ENCODE measurements at regions of chr22 and their contacts with region 1.

Region 1: GRCh38 chr22:45240810-45241631 is at the start of gene KIAA0930:
- DNase-seq: peak; percentile 92
- H3K4me3 Mint-ChIP-seq: peak within 1 kb of the TSS; percentile 97
- H3K27ac Mint-ChIP-seq: peak within 1 kb of the TSS; percentile 91
- H3K4me1 Mint-ChIP-seq: peaks cover 10% of the 10 kb centered on the region
- H3K27me3 Mint-ChIP-seq: no peaks in the 10 kb centered on the region
- total RNA-seq, gene KIAA0930: 45.3 and 45.6 TPM in 2 replicates

Region 2: GRCh38 chr22:45309472-45310227 is 68.6 kb after region 1 on chr22 and contains the start of gene FAM118A:
- intact Hi-C with region 1: loop called (anchors 2 kb)
- DNase-seq: peak; percentile 100
- H3K4me3 Mint-ChIP-seq: peak within 1 kb of the TSS; percentile 93
- H3K27ac Mint-ChIP-seq: peak within 1 kb of the TSS; percentile 91
- H3K4me1 Mint-ChIP-seq: peaks cover 43% of the 10 kb centered on the region
- H3K27me3 Mint-ChIP-seq: no peaks in the 10 kb centered on the region
- total RNA-seq, gene FAM118A: 32.0 and 32.5 TPM in 2 replicates

Measured in activated CD4-positive, alpha-beta T cell treated with anti-CD3 and anti-CD28 coated beads, Interleukin-2, amount 10 ng/mL, durations not matched to agents 24 days and 14 days (primary cell).